Heart right ventricle (tissue), 16 donors: ENCODE measurements at regions of chr1 and their contacts with region 1.

Region 1: DNA sequence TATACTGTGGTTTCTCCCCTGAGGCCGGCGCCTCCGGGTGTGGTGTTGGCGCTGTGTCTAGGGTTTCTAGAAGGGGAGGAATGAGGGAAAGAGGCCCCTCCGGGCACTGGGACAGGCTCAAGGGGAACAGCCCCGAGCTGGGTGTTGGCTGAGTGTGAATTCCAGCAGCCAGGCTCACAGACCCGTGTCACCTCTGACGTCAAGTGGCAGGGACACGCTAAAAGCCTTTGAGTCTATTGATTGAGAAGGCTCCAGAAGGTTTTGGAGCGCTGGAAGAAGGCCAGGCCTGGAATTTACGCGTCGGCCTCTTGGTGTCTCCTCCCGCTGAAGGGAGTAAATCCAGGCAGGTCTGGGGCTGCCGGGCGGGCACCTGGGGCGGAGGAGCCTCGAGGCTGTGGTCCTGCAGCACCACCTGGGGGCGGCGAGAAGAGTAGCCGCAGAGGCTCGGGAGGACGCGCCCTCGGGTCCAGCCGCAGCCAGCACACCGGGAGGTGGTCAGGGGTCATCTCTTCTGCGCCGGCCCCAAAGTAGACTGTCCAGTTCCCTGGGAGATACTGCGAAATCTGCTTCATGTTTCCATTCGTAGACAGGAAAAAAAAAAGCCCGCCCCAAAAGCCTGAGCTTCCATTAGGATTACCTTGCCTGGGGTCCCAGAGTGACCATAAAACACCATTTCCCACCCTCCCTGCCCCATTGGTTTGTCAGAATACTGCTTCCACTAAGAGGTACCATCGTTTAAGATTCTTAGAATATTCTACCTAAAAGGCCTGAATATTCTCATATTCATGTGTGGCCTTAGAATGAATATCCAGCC is 61.7 kb downstream of the TLR5 start:
- DNase-seq: peak; percentile 87 to 89
- ATAC-seq: peak; percentile 88 to 94 (median 92)
- H3K4me3 ChIP-seq: peak overlapping the region in 9 of 10 donors; percentile 25 to 54 (median 45)
- H3K27ac ChIP-seq: peak overlapping the region; percentile 55 to 85 (median 70)
- H3K4me1 ChIP-seq: peaks cover 11 to 38% (median 21%) of the 10 kb centered on the region in 9 donors
- H3K27me3 ChIP-seq: no peaks in the 10 kb centered on the region
- CTCF ChIP-seq: peak; percentile 94 to 99 (median 97)

Region 2: DNA sequence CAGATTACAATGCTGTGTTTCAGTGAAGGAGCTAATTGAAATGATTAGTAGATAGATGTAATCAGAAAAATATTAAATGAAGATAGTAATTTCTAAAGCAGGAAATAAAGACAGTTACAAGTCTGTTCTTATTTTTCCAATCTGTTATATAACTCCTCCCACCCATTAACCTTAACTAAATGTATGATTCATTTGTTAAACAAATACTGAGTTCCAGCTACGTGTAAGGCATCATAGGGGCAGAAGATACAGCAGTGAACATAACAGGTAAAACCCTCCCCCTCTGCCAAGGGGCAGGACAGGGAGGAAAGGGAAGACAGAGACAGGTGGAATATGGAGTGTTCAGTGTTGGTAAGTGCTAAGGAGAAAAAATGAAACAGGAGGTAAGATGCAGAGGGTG is 344.4 kb before region 1 on chr1 and contains the start of gene FAM177B:
- intact Hi-C with region 1: loop called in 9 of 10 experiments (anchors 1 to 5 kb)
- DNase-seq: no peak
- ATAC-seq: no peak
- H3K4me3 ChIP-seq: no peak within 1 kb of the TSS
- H3K27ac ChIP-seq: no peak within 1 kb of the TSS
- H3K4me1 ChIP-seq: no peaks in the 10 kb centered on the region
- H3K27me3 ChIP-seq: no peaks in the 10 kb centered on the region
- CTCF ChIP-seq: no peak
- total RNA-seq, gene FAM177B: not detected

Region 3: DNA sequence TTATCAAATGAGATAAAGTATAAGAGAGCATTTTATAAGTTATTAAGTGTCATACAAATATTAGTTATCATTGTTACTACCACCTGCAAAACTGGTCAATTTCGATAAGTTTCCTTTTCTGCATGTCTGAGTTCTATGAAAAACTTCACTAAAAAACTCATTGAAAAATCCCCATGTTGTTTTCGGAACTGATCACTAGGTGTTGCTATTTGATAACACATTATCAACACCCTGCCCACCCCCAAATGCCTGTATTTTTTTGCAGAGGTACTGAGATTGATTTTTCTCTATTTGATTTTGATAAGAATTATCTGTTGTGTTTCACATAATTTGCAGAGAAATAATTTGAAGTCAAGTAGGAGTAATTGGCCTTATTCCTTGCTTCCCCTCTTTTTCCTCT is 288.6 kb before region 1 on chr1:
- intact Hi-C with region 1: loop called (anchors 1 to 5 kb)
- DNase-seq: no peak
- ATAC-seq: peak in 1 of 8 donors; percentile 57
- H3K4me3 ChIP-seq: no peak overlapping the region
- H3K27ac ChIP-seq: no peak overlapping the region
- H3K4me1 ChIP-seq: peaks cover 0 to 4% (median 0%) of the 10 kb centered on the region in 9 donors
- H3K27me3 ChIP-seq: no peaks in the 10 kb centered on the region
- CTCF ChIP-seq: peak; percentile 14 to 75 (median 63)

Region 4: DNA sequence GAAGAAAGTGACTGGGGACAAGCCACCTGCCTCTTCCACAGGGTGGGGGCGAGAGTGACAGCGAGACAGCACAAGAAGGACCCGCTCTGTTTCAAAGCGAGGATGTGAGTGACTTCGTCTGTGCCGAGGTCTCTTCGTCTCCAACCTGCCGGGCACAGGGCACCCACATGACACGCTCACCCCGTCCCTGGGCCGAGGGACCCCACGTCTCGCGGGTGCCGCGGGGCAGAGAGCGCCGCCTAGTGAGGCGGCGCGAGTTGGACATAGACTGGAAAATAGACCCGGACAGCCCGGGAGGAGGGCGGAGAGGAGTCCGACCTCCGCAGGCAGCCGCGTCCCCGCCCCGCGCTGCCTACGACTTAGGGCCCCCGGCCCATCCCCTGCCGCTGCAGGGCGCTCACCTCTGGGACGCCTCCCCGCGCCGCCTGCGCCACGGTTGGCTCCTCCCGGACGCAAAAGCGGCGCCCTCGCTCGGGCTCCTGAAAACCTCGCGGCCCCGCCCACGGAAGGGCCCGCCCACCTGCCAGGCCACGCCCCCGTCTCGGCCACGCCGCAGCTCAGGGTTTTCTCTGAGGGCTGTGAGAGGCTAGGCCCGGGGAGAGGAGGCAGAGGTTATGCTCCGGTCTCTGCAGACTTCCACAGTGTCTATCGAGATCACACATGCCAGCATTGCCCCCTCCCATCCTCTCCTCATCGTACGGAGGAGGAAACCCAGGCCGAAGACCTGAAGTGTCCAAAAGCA is 61.6 kb after region 1 on chr1 and contains the start of gene TLR5:
- intact Hi-C with region 1: no loop called
- DNase-seq: peak; percentile 84 to 91
- ATAC-seq: peak; percentile 91 to 96 (median 94)
- H3K4me3 ChIP-seq: peak within 1 kb of the TSS; percentile 39 to 75 (median 70)
- H3K27ac ChIP-seq: peak within 1 kb of the TSS in 9 of 10 donors; percentile 5 to 81 (median 45)
- H3K4me1 ChIP-seq: peaks cover 0 to 48% (median 21%) of the 10 kb centered on the region in 9 donors
- H3K27me3 ChIP-seq: no peaks in the 10 kb centered on the region
- CTCF ChIP-seq: peak; percentile 21 to 83 (median 66)
- total RNA-seq, gene TLR5: 0.91 to 5.0 (median 1.5) TPM

Region 5: DNA sequence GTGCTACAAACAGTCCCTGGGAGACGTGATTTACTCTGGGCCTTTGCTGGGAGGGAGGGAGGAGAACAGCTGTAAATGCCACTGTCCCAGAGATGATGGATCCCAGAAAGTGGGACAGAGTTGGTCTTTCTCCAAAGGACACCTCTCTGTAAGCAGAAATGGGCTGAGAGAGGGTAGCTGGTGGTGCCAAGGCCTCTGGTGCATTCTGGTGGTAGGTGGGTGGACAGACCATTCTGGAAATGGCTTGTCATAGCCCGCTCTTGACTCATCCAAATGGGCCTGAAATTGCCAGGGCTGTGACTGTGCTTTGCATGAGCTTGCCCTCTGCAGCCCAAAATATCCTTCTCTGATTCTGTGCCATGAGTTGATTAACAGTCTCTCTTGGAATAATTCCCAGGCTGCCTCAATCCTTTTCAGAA is 347.9 kb after region 1 on chr1:
- intact Hi-C with region 1: no loop called
- DNase-seq: peak in 1 of 2 donors; percentile 42
- ATAC-seq: peak; percentile 67 to 97 (median 90)
- H3K4me3 ChIP-seq: no peak overlapping the region
- H3K27ac ChIP-seq: peak overlapping the region in 7 of 10 donors; percentile 26 to 75 (median 62)
- H3K4me1 ChIP-seq: peaks cover 0 to 21% (median 6%) of the 10 kb centered on the region in 9 donors
- H3K27me3 ChIP-seq: peaks cover 0 to 4% (median 0%) of the 10 kb centered on the region in 7 donors
- CTCF ChIP-seq: peak in 1 of 9 donors; percentile 14

Region 6: DNA sequence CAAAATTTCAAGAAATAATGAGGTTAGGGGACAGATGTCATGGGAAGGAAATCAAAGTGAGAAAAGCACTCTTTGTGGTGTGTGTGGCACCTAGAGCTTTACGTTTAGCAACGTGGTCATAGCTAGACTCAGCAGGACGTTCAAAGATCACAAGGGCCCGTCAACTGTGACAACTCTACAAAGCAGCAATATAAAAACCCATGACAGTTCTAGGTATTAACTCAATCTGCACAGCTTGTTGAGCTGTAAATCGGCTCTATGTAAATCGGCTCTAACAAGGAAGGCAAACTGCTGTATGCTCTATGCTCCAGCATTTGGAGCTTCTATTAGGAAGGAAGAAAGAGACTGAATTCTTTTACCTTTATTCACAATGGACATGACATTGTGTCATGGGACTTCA is 699.6 kb after region 1 on chr1:
- intact Hi-C with region 1: no loop called
- DNase-seq: no peak
- ATAC-seq: no peak
- H3K4me3 ChIP-seq: no peak overlapping the region
- H3K27ac ChIP-seq: no peak overlapping the region
- H3K4me1 ChIP-seq: peaks cover 0 to 15% (median 7%) of the 10 kb centered on the region in 9 donors
- H3K27me3 ChIP-seq: no peaks in the 10 kb centered on the region
- CTCF ChIP-seq: no peak